Mammary epithelial cell (primary cell): ENCODE measurements at regions of chr20 and their contacts with region 1.

Region 1: DNA sequence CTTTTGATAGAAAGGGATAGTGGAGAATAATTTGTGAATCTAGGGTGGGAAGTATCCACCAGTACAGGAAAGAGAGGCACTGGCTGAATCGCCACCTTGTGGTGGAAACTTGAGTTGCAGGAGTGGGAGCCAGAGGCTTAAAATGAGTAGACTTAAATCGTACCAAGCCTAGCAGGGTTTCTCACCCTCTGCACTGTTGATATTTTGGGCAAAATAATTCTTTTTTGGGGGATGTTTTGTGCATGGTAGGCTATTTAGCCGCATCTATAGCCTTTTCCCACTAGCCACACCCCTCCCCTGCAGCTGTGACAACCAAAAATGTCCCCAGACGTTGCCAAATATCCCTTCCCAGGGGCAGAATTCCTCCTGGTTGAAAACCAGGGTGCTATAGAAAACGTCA is 119.1 kb downstream of the DHX35 start:
- DNase-seq: peak; percentile 56
- H3K4me3 ChIP-seq: no peak overlapping the region
- H3K27ac ChIP-seq: no peak overlapping the region
- H3K4me1 ChIP-seq: no peaks in the 10 kb centered on the region
- H3K27me3 ChIP-seq: peaks cover 2% of the 10 kb centered on the region
- CTCF ChIP-seq: peak; percentile 94 to 95

Region 2: DNA sequence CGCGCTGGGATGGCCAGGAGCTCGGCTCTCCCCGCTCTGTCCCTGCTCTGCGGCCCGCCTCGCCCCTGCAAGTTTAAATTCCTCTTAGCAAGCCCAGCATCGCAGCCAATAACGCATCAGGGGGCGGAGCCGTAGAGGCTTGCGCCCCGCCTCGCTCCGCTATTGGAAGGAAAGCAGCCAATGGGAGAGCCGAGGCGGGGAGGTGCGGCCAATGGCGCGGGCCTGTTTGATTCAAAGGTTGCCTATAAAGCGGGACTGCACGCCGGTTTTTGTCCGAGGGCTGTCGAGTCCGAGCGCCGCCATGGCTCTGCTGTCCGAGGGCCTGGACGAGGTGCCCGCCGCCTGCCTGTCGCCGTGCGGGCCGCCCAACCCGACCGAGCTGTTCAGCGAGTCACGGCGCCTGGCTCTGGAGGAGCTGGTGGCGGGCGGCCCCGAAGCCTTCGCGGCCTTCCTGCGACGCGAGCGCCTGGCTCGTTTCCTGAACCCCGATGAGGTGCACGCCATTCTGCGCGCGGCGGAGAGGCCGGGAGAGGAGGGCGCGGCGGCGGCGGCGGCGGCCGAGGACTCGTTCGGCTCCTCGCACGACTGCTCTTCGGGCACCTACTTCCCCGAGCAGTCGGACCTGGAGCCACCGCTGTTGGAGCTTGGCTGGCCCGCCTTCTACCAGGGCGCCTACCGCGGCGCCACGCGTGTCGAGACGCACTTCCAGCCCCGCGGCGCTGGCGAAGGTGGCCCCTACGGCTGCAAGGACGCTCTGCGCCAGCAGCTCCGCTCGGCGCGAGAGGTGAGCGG is 154.9 kb before region 1 on chr20 and contains the start of gene FAM83D:
- CTCF ChIA-PET with region 1: no interaction called
- dilution Hi-C with region 1: no loop called
- in situ Hi-C with region 1: no loop called
- intact Hi-C with region 1: loop called (anchors 1 kb)
- DNase-seq: peak; percentile 98
- H3K4me3 ChIP-seq: peak within 1 kb of the TSS; percentile 56 to 79 (median 77)
- H3K27ac ChIP-seq: peak within 1 kb of the TSS; percentile 41
- H3K4me1 ChIP-seq: peaks cover 11% of the 10 kb centered on the region
- H3K27me3 ChIP-seq: no peaks in the 10 kb centered on the region
- CTCF ChIP-seq: no peak
- total RNA-seq, gene FAM83D: 3.7 to 29.9 TPM

Region 3: GRCh38 chr20:39716796-39717341 is 635.6 kb after region 1 on chr20:
- CTCF ChIA-PET with region 1: no interaction called
- dilution Hi-C with region 1: no loop called
- in situ Hi-C with region 1: no loop called
- intact Hi-C with region 1: no loop called
- DNase-seq: peak; percentile 10
- H3K4me3 ChIP-seq: no peak overlapping the region
- H3K27ac ChIP-seq: no peak overlapping the region
- H3K4me1 ChIP-seq: no peaks in the 10 kb centered on the region
- H3K27me3 ChIP-seq: no peaks in the 10 kb centered on the region
- CTCF ChIP-seq: no peak